Activated CD4-positive, alpha-beta T cell treated with anti-CD3 and anti-CD28 coated beads for 36 hours (primary cell): ENCODE measurements at regions of chr5 and their contacts with region 1.

Region 1: DNA sequence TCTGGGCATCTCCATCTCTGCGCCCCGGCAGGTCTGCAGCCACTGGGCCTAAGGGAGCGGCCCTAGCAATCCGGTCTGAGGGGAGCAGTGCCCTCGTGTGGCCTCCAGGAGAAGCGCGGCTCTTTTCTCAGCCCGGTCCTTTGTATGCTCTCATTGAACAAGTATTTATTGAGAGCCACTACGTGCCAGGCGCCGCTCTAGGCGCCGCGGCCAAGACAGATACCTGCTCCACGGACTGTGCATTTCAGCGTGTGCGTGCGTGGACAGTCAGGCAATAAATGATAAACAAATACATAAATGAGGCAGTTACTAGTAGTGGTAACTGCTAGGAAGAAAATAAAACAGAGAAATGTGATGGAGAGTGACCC is 2.3 kb upstream of the SLC4A9 start:
- DNase-seq: peak; percentile 89
- ATAC-seq: peak; percentile 98
- H3K4me3 Mint-ChIP-seq: peak overlapping the region; percentile 48
- H3K27ac Mint-ChIP-seq: peak overlapping the region; percentile 44
- H3K4me1 Mint-ChIP-seq: peaks cover 12% of the 10 kb centered on the region
- H3K27me3 Mint-ChIP-seq: peaks cover 8% of the 10 kb centered on the region

Region 2: GRCh38 chr5:140202078-140202477 is 155.6 kb before region 1 on chr5:
- CTCF ChIA-PET with region 1: no interaction called
- POLR2A ChIA-PET with region 1: no interaction called
- intact Hi-C with region 1: no loop called
- DNase-seq: no peak
- ATAC-seq: no peak
- H3K4me3 Mint-ChIP-seq: no peak overlapping the region
- H3K27ac Mint-ChIP-seq: no peak overlapping the region
- H3K4me1 Mint-ChIP-seq: no peaks in the 10 kb centered on the region
- H3K27me3 Mint-ChIP-seq: no peaks in the 10 kb centered on the region

Region 3: GRCh38 chr5:140346348-140347101 is 11.2 kb before region 1 on chr5 and contains the start of gene HBEGF:
- CTCF ChIA-PET with region 1: interaction called, 44 read pairs
- POLR2A ChIA-PET with region 1: no interaction called
- intact Hi-C with region 1: no loop called
- DNase-seq: peak; percentile 74
- ATAC-seq: peak; percentile 46
- H3K4me3 Mint-ChIP-seq: peak within 1 kb of the TSS; percentile 80
- H3K27ac Mint-ChIP-seq: no peak within 1 kb of the TSS
- H3K4me1 Mint-ChIP-seq: peaks cover 44% of the 10 kb centered on the region
- H3K27me3 Mint-ChIP-seq: peaks cover 2% of the 10 kb centered on the region
- total RNA-seq, gene HBEGF: 11.8 to 12.5 TPM

Region 4: DNA sequence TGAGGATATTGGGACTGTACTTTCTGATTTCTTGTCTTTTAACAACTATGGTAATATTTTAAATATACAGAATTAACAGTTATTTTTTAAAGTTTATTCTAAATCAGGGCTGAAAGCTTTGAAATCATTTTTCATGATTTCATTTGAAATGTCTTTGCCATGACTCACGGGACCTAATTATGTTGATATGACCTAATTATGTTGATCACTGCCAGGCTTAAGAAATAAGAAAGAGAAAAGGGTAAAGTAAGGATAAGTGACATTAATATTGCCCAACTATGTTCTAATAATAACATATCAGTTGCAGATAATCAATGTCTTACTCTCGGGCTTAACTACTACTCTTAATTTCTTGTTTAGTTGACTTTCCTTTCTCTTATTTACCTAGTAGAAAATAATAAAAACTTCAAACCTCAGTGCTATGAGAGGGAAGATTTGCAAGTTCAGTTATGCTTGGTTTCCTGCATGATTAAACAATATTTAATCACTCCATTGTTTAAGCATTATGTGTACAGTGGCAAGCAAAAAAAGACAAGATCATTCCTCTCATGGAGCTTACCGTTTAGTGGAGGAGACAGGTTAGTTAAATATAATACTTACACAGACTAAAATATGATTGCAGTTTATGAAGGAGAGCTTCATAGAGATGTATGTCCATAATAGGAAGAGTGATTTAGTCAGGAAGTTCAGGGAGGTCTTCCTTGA is 122.8 kb after region 1 on chr5:
- CTCF ChIA-PET with region 1: no interaction called
- POLR2A ChIA-PET with region 1: no interaction called
- intact Hi-C with region 1: no loop called
- DNase-seq: no peak
- ATAC-seq: no peak
- H3K4me3 Mint-ChIP-seq: no peak overlapping the region
- H3K27ac Mint-ChIP-seq: no peak overlapping the region
- H3K4me1 Mint-ChIP-seq: no peaks in the 10 kb centered on the region
- H3K27me3 Mint-ChIP-seq: no peaks in the 10 kb centered on the region